MCF 10A (cell line): ENCODE measurements at regions of chr2 and their contacts with region 1.

Region 1: DNA sequence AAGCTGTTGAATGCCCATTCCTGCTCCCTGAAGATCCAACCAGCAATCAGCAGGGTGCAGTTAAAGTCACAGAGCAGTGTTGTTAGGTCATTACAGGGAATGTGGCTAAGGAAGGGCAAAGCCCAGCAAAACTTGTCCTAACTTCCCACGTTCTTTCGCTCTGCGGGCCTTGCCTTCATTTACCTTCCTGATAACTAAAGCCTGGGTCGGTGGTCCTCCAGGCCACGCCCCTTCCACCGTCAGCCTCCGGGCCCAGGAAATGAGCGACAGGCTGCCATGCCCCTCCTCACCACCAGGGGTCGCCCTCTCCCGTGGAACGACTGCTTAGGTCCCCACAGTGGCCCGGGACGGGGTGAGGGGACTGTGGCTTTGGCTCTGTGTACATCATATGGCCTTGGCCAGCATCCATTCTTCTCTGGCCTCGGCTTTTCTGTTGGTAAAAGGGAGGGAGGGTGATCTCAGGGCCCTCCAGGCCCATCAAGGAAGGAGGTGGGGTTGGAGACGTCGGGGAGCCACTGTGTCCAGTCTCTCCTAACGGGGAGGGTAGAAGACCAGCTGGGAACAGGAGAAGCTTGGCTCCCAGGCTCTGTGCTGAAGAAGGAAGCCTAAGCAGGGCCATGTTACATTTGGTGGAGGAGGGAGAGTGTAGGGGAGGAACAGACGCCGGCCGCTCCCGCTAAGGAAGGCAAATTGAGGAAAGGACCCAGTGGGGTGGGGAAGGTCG is 2.2 kb downstream of the SH2D6 start:
- DNase-seq: peak; percentile 83
- H3K4me3 Mint-ChIP-seq: peak overlapping the region; percentile 24
- H3K27ac Mint-ChIP-seq: peak overlapping the region; percentile 92
- H3K4me1 Mint-ChIP-seq: peaks cover 30% of the 10 kb centered on the region
- H3K27me3 Mint-ChIP-seq: no peaks in the 10 kb centered on the region
- CTCF ChIP-seq: peak; percentile 99

Region 2: GRCh38 chr2:85602476-85603234 is 182.0 kb after region 1 on chr2 and contains the start of gene TMEM150A:
- CTCF ChIA-PET with region 1: no interaction called
- POLR2A ChIA-PET with region 1: interaction called, 3 read pairs
- intact Hi-C with region 1: loop called (anchors 5 kb)
- DNase-seq: peak; percentile 90
- H3K4me3 Mint-ChIP-seq: peak within 1 kb of the TSS; percentile 79
- H3K27ac Mint-ChIP-seq: peak within 1 kb of the TSS; percentile 70
- H3K4me1 Mint-ChIP-seq: peaks cover 12% of the 10 kb centered on the region
- H3K27me3 Mint-ChIP-seq: no peaks in the 10 kb centered on the region
- CTCF ChIP-seq: peak; percentile 30
- total RNA-seq, gene TMEM150A: 12.5 and 14.5 TPM in 2 replicates

Region 3: DNA sequence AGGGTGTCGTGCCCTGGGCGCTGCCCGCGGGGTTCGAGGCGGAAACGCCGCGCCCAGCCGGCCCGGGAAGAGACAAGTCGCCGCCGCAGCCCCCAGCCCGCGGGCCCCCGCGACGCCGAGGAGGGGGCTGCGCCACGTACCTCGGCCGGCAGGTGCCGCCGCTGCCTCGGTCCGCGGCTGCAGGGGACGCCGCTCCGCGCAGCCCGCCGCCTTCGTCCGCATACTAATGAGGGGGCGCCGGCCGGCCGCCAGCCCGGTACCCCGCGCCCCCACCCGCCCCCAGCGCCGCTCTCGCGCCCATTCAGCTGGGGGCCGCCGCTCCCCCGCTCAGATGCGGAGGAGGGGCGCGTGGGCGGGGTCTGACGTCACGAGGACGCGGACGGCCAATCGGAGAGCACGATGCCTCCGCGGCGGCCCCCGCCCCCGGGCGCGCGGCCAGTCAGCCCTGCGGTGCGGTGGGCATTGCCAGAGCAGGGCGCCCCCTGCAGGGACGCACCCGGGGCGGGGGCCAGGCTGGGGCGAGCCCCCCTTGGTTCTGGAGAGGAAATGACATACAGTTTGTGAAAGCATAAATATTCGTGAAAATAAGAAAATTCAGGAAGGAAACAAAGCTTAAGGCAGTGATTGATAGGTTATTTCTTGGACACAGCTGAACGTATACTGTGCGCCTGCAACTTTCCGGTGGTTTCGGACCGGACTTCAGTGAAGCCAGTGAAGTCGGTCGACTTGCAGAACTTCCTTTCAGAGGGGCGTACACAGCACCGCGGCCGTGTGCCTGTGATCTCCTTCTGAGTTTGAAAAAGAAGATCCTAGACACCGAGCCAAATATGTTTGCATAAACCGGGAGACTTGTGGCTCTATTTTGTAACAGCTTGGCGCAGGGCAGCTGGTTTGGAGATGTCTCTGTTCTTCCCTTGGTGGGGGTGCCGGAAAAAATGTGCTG is 468.3 kb after region 1 on chr2 and contains the start of gene ST3GAL5:
- CTCF ChIA-PET with region 1: no interaction called
- POLR2A ChIA-PET with region 1: no interaction called
- intact Hi-C with region 1: no loop called
- DNase-seq: peak; percentile 76
- H3K4me3 Mint-ChIP-seq: peak within 1 kb of the TSS; percentile 90
- H3K27ac Mint-ChIP-seq: no peak within 1 kb of the TSS
- H3K4me1 Mint-ChIP-seq: peaks cover 36% of the 10 kb centered on the region
- H3K27me3 Mint-ChIP-seq: no peaks in the 10 kb centered on the region
- CTCF ChIP-seq: peak; percentile 50
- total RNA-seq, gene ST3GAL5: 1.2 and 2.3 TPM in 2 replicates